Aorta (tissue), 5 donors: ENCODE measurements at regions of chr11 and their contacts with region 1.

Region 1: DNA sequence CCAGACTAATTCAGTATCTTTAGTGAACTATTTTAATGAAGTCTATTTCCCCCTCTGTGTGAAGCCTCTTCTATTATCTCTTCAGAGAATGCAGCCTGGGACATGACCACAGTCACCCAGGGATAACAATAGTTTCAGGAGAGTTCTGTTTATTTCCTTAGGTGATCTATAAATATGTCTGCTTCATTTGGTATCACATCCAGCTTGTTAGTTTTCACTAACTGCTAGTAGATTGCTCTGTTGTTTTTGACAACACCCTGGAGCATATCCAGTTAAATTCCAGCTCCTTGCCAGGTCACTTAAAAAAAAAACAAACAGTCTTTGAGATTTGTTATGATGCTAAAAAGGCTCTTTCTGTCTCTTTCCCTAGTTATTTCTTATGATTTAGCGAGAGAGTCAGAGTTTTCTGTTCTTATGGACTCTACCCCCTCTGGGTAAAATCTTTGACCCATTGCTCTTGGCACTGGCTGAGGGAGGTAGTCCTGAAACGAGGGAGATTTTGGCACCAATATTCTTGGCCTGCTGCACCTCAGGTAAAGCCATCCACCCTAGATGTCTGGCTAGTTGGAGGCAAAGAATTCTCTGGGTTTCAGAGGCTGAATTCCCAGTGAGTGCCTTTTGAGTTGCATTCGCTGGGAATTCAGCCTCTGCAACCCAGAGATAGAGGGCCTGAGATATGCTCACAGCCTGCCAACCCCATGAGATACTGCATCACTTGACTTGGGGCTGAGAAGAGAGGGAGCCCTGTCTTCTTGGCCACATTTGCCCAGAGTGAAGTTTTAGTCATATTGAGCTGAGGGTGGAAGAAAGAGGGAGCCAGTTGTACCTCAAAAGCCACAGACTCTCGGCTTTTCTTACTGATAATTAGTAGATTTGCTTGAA is 159.1 kb downstream of the PGR start:
- DNase-seq: no peak
- ATAC-seq: no peak
- H3K4me3 ChIP-seq: no peak overlapping the region
- H3K27ac ChIP-seq: no peak overlapping the region
- H3K4me1 ChIP-seq: no peaks in the 10 kb centered on the region
- H3K27me3 ChIP-seq: no peaks in the 10 kb centered on the region

Region 2: DNA sequence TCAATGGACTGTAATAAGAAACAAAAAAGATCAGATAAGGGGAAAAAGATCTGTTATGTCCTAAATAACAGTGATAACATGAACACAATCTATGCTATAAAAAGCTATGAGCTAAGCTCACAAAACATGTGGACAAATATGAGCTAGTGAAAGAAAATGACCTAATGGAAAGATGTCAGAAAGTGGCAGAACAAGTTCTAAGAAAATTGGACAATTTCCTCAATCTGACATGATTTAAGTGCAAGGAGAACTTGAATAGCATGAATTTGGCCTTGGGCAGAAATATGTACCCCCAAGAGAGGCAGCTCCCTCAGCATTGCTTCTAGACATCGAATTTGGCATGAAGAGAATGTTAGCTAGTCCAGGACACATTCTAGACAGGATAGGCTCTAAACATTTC is 371.1 kb after region 1 on chr11:
- intact Hi-C with region 1: loop called in 1 of 2 experiments (anchors 10 kb)
- DNase-seq: no peak
- ATAC-seq: no peak
- H3K4me3 ChIP-seq: no peak overlapping the region
- H3K27ac ChIP-seq: peak overlapping the region; percentile 48 to 82
- H3K4me1 ChIP-seq: peaks cover 0 to 1% of the 10 kb centered on the region in 2 donors
- H3K27me3 ChIP-seq: no peaks in the 10 kb centered on the region

Region 3: GRCh38 chr11:101848262-101848661 is 877.7 kb after region 1 on chr11:
- intact Hi-C with region 1: loop called in 1 of 2 experiments (anchors 10 kb)
- DNase-seq: no peak
- ATAC-seq: no peak
- H3K4me3 ChIP-seq: no peak overlapping the region
- H3K27ac ChIP-seq: no peak overlapping the region
- H3K4me1 ChIP-seq: no peaks in the 10 kb centered on the region
- H3K27me3 ChIP-seq: no peaks in the 10 kb centered on the region